Tibial artery (tissue), 4 donors: ENCODE measurements at regions of chr3 and their contacts with region 1.

Region 1: GRCh38 chr3:156943430-156943829 is 117.3 kb downstream of the LEKR1 start:
- DNase-seq: no peak
- H3K4me3 ChIP-seq: no peak overlapping the region
- H3K27ac ChIP-seq: no peak overlapping the region
- H3K4me1 ChIP-seq: no peaks in the 10 kb centered on the region
- H3K27me3 ChIP-seq: no peaks in the 10 kb centered on the region
- CTCF ChIP-seq: no peak

Region 2: DNA sequence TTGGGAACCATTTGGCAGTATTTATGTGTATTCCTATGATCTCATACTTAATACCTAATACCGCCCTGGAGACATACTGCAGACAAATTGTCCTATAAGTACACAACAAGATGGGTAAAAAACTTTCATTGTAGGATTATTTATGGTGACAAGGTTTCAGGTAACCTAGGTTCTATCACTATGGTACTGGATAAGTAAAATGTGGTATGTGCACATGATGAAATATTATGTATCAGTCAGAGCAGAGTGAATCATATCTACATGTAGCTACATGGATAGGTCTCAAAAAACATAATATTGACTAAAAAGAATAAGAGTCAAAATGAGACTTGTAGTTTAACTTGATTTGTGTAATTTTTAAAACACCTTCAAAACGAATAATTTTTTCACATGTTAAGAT is 30.5 kb after region 1 on chr3:
- intact Hi-C with region 1: loop called (anchors 2 kb)
- DNase-seq: no peak
- H3K4me3 ChIP-seq: no peak overlapping the region
- H3K27ac ChIP-seq: no peak overlapping the region
- H3K4me1 ChIP-seq: no peaks in the 10 kb centered on the region
- H3K27me3 ChIP-seq: no peaks in the 10 kb centered on the region
- CTCF ChIP-seq: no peak